ENCODE measurements at regions of chr16 and their contacts with region 1.

Region 1: DNA sequence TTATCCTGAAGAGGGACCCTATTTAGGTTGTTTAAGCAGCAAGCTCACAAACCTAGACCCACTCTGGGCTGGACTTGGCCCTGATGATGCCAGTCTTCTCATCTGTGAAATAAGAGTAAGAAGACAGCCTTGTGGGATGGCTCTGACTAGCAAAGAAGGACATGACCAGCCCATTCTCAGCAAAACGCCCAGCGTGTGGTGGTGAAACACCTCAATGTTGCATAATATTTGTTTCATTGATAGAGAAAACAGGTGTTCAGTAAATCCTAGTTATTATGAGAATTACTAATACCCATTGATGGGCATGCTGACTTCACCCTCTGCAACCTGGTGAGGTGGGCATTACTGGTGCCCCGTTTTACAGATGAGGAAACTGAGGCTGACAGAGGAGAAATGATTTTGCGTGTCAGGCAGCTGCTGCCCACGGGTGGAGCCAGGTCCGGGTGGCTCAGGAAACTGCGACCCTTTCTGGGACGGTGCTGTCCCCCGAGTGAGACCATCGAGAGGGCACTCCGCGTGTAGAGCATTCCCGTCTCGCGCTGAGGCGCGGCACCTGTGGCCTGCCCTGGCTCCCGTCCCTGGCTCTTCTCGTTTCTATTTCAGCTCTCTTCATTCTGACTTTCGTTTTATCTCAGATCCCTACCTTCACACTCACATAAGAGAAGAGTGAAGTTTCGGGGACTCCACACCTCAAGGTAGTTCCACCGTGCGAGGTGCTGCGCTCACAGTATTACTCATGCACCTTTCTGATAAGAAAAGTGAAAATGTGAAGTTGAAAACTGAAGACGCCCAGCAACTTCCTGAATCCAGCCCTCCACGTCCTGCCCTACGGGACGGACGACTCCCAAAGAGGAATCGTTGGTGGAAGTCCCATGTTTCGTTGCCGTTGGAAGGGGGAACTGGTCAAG is 48.5 kb downstream of the IRF8 start:
- DNase-seq: no peak
- H3K4me3 ChIP-seq: peak overlapping the region; percentile 38
- H3K27ac ChIP-seq: no peak overlapping the region
- H3K4me1 ChIP-seq: peaks cover 65% of the 10 kb centered on the region
- CTCF ChIP-seq: no peak

Region 2: DNA sequence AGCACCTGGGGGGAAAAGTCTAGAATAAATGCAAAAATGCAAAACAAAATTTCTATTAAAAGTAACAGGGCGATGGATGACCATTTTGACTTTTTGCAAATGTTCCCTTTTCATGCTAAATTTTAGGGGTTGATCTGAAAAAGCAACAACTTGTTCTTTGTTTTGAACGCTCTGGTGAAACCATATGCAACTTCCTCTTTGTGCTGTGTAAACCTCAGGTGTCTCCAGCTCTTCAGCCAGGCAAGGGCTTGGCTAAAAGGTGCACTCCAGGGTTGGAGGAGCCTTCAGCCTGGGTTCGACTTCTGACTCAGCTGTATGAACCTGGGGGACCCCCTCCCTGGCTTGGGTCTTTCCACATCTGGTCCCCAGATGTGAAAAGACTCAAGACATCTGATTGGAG is 39.0 kb before region 1 on chr16:
- CTCF ChIA-PET with region 1: no interaction called
- POLR2A ChIA-PET with region 1: interaction called, 5 read pairs
- intact Hi-C with region 1: loop called (anchors 2 kb)
- DNase-seq: peak; percentile 93
- H3K4me3 ChIP-seq: peak overlapping the region; percentile 62
- H3K27ac ChIP-seq: peak overlapping the region; percentile 99
- H3K4me1 ChIP-seq: peaks cover 99% of the 10 kb centered on the region
- CTCF ChIP-seq: no peak